GM12878 (cell line): ENCODE measurements at regions of chr9 and their contacts with region 1.

Region 1: GRCh38 chr9:8895861-8896224 is 1096.3 kb upstream of the DMAC1 start:
- DNase-seq: no peak
- ATAC-seq: peak; percentile 56
- H3K4me3 ChIP-seq: no peak overlapping the region
- H3K27ac ChIP-seq: no peak overlapping the region
- H3K4me1 ChIP-seq: no peaks in the 10 kb centered on the region
- H3K27me3 ChIP-seq: no peaks in the 10 kb centered on the region
- CTCF ChIP-seq: peak; percentile 36 to 50 (median 43); a peak in 5 of 6 replicates
- EP300 ChIP-seq: no peak
- POLR2A ChIP-seq: no peak
- RAD21 ChIP-seq: peak; percentile 67

Region 2: DNA sequence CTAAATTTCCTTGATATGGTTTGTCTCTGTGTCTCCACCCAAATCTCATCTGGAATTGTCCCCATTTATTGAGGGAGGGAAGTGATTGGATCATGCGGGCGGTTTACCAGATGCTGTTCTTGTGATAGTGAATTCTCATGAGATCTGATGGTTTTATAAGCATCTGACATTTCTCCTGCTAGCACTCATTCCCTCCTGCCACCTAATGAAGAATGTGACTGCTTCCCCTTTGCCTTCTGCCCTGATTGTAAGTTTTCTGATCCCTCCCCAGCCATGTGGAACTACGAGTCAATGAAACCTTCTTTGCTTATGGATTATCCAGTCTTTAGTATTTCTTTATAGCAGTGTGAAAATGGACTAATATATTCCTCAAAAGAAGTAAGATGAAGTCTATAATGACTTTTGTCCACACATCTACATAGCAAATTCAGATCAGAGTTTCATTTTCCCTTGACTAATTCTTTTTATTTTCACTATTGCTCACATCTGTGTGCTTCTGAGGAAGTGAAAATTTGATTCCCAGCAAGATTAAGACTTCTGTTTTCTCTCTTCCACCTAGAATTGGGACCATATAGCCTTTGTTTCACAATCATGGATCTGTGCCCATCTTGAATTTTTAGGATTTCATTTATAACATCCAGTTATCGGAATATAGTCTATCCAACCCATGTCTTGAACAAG is 1489.8 kb before region 1 on chr9:
- CTCF ChIA-PET with region 1: interaction called, 11 read pairs
- POLR2A ChIA-PET with region 1: no interaction called
- RAD21 ChIA-PET with region 1: no interaction called
- SMC1A ChIA-PET with region 1: no interaction called
- in situ Hi-C with region 1: no loop called
- intact Hi-C with region 1: no loop called
- DNase-seq: no peak
- ATAC-seq: peak; percentile 82
- H3K4me3 ChIP-seq: no peak overlapping the region
- H3K27ac ChIP-seq: no peak overlapping the region
- H3K4me1 ChIP-seq: peaks cover 7% of the 10 kb centered on the region; the same call in 1 of the 2 replicates
- H3K27me3 ChIP-seq: no peaks in the 10 kb centered on the region; a peak in 1 of 4 replicates
- CTCF ChIP-seq: no peak
- EP300 ChIP-seq: peak in 1 of 2 experiments; percentile 26; a peak in 1 of 4 replicates
- POLR2A ChIP-seq: no peak
- RAD21 ChIP-seq: no peak